Heart right ventricle (tissue), 16 donors: ENCODE measurements at regions of chr6 and their contacts with region 1.

Region 1: DNA sequence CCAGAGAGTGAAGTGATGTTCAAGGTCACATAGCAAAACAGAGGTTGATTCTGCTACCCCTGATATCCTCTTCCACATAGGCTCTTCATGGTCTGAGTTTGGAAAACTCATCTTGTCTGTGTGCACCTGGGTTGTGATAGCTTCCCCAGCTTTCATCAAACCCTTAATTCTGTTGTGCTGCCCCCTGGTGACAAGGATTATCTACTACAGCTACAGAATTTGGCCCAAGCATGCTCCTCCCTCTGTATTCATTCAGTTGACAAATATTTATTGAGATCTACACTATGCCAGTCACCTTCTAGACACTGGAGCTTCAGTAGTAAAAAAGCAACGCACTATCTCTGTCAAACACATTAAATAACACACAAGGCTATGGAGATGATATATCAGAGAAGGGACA is 50.4 kb downstream of the SMPDL3A start:
- DNase-seq: peak in 1 of 2 donors; percentile 42
- ATAC-seq: peak in 3 of 8 donors; percentile 56 to 72 (median 61)
- H3K4me3 ChIP-seq: no peak overlapping the region
- H3K27ac ChIP-seq: no peak overlapping the region
- H3K4me1 ChIP-seq: no peaks in the 10 kb centered on the region
- H3K27me3 ChIP-seq: peaks cover 0 to 36% (median 14%) of the 10 kb centered on the region in 7 donors
- CTCF ChIP-seq: peak; percentile 44 to 70 (median 66)

Region 2: GRCh38 chr6:122730775-122731386 is 108.6 kb before region 1 on chr6:
- intact Hi-C with region 1: loop called (anchors 1 to 5 kb)
- DNase-seq: no peak
- ATAC-seq: no peak
- H3K4me3 ChIP-seq: no peak overlapping the region
- H3K27ac ChIP-seq: no peak overlapping the region
- H3K4me1 ChIP-seq: no peaks in the 10 kb centered on the region
- H3K27me3 ChIP-seq: peaks cover 0 to 32% (median 8%) of the 10 kb centered on the region in 7 donors
- CTCF ChIP-seq: peak; percentile 49 to 89 (median 79)

Region 3: DNA sequence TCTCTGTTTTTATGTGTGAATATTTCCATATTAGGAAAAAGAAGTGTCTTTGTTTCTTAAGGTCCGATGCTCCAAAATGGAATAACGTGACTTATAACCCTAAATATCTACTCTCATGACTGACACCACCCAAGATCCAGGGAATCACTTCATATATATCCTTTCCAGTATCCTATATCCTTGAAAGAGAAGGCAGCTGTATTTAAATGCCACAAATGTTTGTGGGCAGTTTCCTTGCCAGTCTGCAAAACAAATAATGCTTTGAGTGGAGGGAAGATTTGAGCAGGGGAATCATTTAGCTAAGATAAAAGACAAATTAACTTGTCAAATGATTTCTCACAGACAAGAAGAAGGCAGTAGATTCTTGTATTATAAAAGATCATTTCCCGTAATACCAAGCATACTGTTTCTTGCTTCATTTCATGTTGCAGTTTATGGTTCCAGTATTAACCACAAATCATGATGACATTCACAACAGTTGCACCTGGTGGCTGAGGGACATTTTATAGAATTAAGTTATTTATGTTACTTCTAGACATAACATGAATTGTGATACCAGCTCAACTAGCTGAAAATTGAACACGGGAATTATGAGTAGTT is 89.9 kb before region 1 on chr6:
- intact Hi-C with region 1: loop called in 2 of 10 experiments (anchors 5 kb)
- DNase-seq: no peak
- ATAC-seq: no peak
- H3K4me3 ChIP-seq: no peak overlapping the region
- H3K27ac ChIP-seq: no peak overlapping the region
- H3K4me1 ChIP-seq: peaks cover 0 to 20% (median 0%) of the 10 kb centered on the region in 9 donors
- H3K27me3 ChIP-seq: peaks cover 0 to 4% (median 0%) of the 10 kb centered on the region in 7 donors
- CTCF ChIP-seq: no peak